ENCODE measurements at regions of chr12 and their contacts with region 1.

Region 1: DNA sequence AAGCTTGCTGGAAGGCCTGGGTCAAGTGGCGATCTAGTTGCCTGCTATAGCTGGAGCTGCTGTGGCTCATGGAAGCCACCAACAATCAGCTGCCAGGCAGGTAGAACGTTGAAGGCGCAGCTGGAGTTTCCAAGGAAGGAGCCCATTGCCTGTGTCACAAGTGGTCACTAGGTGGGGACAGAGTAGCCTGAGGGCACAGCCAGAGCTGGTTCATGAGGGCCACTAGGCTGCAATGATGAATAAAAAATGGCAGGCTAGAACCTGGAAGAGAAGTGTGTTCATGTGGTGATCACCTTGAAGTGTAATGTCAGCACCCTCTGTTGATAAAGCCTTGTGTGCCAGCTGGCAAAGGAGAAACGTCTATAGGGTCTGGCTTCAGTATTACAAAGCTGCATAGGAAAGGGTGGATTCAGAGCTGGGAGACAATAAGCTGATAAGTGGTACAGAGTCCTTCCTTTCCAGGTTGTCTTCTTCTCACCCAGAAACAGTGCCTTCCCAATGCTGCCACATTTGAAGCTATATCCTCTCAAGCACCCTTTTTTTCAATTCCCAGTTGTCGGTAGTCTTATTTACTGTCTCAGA is 165.8 kb downstream of the EMP1 start:
- DNase-seq: peak; percentile 47
- ATAC-seq: peak; percentile 99
- H3K4me3 ChIP-seq: no peak overlapping the region
- H3K27ac ChIP-seq: no peak overlapping the region
- H3K4me1 ChIP-seq: no peaks in the 10 kb centered on the region
- H3K27me3 ChIP-seq: no peaks in the 10 kb centered on the region; a peak in 1 of 5 replicates
- CTCF ChIP-seq: peak; percentile 87
- EP300 ChIP-seq: no peak
- POLR2A ChIP-seq: no peak
- RAD21 ChIP-seq: peak; percentile 49

Region 2: DNA sequence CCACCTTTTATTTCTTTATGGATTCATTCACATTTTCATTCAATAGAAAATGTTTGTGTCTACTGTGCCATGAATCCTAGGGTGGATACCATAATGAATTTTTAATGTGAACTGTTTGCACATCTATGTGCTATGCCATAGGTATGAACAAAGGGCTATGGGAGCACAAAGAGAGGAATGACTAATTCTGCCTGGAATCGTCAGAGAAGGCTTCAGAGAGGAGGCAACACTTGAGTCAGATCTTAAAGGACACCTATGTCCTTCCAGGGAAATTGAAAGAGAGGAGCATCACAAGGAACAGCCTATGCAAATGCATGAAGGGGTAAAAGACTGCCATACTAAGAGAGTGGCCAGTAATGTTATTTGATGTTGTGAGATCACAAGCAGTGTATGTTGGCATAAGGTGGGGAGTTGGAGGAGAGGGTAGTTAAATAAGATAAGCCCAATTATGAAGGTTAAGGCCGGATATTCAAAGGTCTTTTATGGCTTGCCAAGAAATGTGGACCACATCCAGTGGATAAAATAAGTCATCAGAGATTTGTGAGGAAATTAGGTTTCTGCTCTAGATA is 372.3 kb after region 1 on chr12:
- CTCF ChIA-PET with region 1: no interaction called
- POLR2A ChIA-PET with region 1: no interaction called
- in situ Hi-C with region 1: no loop called
- intact Hi-C with region 1: loop called (anchors 10 kb)
- DNase-seq: no peak
- ATAC-seq: no peak
- H3K4me3 ChIP-seq: no peak overlapping the region
- H3K27ac ChIP-seq: no peak overlapping the region
- H3K4me1 ChIP-seq: no peaks in the 10 kb centered on the region
- H3K27me3 ChIP-seq: no peaks in the 10 kb centered on the region; a peak in 1 of 5 replicates
- CTCF ChIP-seq: no peak
- EP300 ChIP-seq: no peak
- POLR2A ChIP-seq: no peak
- RAD21 ChIP-seq: no peak

Measured in HepG2 (cell line).